ENCODE measurements at regions of chr6 and their contacts with region 1.

Region 1: GRCh38 chr6:57172136-57173055 is at the start of gene BAG2:
- DNase-seq: peak; percentile 98
- H3K4me3 ChIP-seq: peak within 1 kb of the TSS; percentile 81 to 92 (median 86)
- H3K27ac ChIP-seq: peak within 1 kb of the TSS; percentile 90 to 96 (median 96)
- H3K4me1 ChIP-seq: peaks cover 15 to 45% (median 40%) of the 10 kb centered on the region in 4 donors
- H3K27me3 ChIP-seq: no peaks in the 10 kb centered on the region
- CTCF ChIP-seq: peak; percentile 26 to 39 (median 35)
- EP300 ChIP-seq: no peak
- POLR2A ChIP-seq: peak; percentile 15
- total RNA-seq, gene BAG2: 29.0 to 42.8 (median 39.6) TPM

Region 2: DNA sequence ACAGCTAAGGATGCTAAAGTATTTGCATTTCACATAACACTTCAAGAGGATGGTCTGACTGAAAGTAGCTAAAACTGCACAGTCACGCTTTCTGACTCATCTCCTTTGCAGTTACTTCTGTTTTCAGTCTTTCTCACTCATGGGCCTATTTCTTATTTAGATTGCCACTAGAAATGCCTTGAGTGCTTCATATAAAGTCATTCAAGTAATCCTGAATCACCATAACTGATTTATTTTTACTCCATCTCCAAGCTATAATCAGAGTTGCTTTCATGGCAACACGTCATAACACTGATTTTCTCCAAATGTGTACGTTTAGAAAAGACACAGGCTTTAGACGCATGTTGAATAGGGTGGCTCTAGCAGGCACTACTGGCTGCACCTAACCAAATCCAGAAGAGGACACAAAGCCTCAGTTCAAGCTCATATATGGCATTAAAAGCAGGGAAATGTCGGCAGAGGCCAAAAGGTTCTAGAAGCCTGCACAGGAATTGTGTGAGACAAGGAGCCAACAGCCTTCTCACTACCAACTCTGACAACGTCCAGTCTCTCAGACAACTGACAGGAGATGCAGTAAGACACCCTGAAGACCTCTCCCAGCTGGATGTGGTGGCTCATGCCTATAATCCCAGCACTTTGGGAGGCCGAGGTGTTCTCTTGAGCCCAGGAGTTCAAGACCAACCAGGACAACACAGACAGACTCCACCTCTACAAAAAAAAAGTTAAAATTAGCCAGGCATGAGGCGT is 281.5 kb before region 1 on chr6:
- intact Hi-C with region 1: loop called (anchors 10 kb)
- DNase-seq: no peak
- H3K4me3 ChIP-seq: no peak overlapping the region
- H3K27ac ChIP-seq: peak overlapping the region; percentile 66 to 75 (median 70)
- H3K4me1 ChIP-seq: peaks cover 0 to 15% (median 11%) of the 10 kb centered on the region in 4 donors
- H3K27me3 ChIP-seq: no peaks in the 10 kb centered on the region
- CTCF ChIP-seq: no peak
- EP300 ChIP-seq: no peak
- POLR2A ChIP-seq: no peak

Region 3: DNA sequence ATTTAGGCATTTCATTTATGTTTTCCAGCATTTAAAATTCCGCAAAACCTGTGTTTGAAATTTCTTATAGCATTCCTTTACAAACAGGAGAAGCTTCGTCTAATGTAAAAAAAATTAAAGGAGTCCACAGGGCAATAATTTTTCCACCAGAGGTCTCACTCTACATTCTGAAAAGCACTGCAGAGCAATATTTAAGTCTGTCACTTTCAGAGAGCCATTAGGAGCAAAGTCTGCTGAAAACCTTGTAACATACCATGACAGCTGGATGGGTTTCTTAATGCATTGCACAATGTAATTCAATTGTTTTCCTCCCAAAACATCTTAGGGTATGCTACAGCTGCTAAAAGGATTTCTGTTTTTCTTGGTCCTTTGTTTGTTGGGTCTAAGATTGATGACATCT is 17.7 kb after region 1 on chr6:
- intact Hi-C with region 1: no loop called
- DNase-seq: no peak
- H3K4me3 ChIP-seq: no peak overlapping the region
- H3K27ac ChIP-seq: peak overlapping the region in 2 of 4 donors; percentile 15 to 42
- H3K4me1 ChIP-seq: peaks cover 0 to 14% (median 12%) of the 10 kb centered on the region in 4 donors
- H3K27me3 ChIP-seq: no peaks in the 10 kb centered on the region
- CTCF ChIP-seq: peak; percentile 49 to 57 (median 54)
- EP300 ChIP-seq: no peak
- POLR2A ChIP-seq: no peak

Region 4: DNA sequence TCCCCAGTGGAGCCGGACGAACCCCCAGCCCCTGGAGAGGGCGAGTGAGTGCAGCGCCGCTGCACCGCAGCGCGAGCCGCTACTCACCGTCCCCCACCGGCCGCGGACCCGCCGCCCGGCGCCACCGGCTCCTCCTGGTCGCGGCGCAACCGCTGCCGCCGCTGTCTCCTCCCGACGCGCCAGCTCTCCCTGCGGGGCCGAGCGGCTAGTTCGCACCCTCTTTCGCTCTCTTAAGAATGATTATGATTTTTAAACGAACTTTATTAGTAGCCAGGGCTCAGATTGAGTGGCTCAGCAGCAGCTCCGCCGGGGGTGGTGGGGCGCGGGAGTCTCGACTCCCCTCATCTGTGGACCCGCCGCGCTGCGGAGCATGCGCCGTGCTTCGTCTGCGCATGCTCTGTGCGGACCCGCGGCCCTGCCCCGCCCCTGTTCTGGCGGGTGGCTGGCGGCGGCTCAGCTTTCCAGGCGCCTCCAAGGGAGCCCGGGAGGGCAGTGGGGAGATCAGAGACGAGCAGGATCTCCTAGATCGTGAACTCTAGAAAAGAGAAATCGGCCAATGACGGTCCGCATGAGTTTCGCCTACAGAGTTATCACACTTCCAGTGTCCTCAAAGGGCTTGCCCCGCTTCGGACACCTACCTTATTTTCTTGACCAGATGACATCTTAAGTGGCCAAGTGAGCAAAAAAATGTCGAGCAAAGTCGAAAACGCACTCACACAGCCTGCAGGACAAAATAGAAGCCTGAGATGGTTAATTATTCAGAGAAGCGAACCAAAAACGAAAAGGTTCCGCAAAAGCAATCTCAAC is 49.7 kb after region 1 on chr6 and contains the start of gene RAB23:
- intact Hi-C with region 1: loop called (anchors 5 kb)
- DNase-seq: peak; percentile 93
- H3K4me3 ChIP-seq: peak within 1 kb of the TSS; percentile 81 to 97 (median 91)
- H3K27ac ChIP-seq: peak within 1 kb of the TSS; percentile 91 to 96 (median 94)
- H3K4me1 ChIP-seq: peaks cover 6 to 34% (median 30%) of the 10 kb centered on the region in 4 donors
- H3K27me3 ChIP-seq: no peaks in the 10 kb centered on the region
- CTCF ChIP-seq: no peak
- EP300 ChIP-seq: no peak
- POLR2A ChIP-seq: peak; percentile 88
- total RNA-seq, gene RAB23: 57.8 to 102 (median 70.3) TPM

Region 5: DNA sequence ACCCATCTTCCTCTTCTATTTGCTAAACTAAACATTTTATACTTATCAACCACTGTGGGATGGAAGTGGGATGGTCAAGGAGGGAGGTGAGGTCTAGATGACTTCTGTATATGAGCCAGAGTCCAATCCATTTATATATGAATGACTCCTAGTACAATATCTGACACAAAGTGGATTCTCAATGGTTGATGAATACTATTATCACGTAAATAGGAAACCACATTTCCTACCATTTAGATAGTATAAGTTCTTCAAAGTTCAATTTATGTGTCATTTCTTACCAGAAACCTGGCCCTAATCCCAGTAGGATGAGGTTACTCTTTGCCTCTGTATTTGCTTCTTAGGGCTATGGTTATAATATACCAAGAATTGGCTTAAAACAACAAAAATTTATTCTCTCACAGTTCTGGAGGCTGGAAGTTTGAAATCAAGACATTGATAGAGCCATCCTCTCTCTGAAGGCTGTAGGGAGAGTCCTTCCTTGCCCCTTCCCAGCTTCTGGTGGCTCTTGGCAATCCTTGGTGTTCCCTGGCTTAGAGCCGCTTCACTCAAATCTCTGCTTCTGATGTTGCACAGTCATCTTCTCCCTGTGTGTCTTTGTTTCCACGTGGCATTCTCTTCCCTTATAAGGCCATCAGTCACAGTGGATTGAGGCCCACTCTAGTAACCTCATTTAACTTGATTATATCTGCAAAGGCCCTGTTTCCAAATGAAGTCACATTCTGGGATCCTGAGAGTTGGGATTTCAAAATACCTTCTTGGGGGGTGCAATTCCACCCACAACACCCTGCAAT is 90.7 kb after region 1 on chr6:
- intact Hi-C with region 1: loop called (anchors 5 kb)
- DNase-seq: no peak
- H3K4me3 ChIP-seq: no peak overlapping the region
- H3K27ac ChIP-seq: peak overlapping the region; percentile 80 to 90 (median 82)
- H3K4me1 ChIP-seq: peaks cover 5 to 81% (median 77%) of the 10 kb centered on the region in 4 donors
- H3K27me3 ChIP-seq: no peaks in the 10 kb centered on the region
- CTCF ChIP-seq: no peak
- EP300 ChIP-seq: no peak
- POLR2A ChIP-seq: no peak

Region 6: GRCh38 chr6:57316581-57317059 is 144.2 kb after region 1 on chr6:
- intact Hi-C with region 1: loop called (anchors 5 kb)
- DNase-seq: no peak
- H3K4me3 ChIP-seq: peak overlapping the region; percentile 55 to 70 (median 62)
- H3K27ac ChIP-seq: peak overlapping the region; percentile 62 to 74 (median 69)
- H3K4me1 ChIP-seq: peaks cover 13 to 38% (median 27%) of the 10 kb centered on the region in 4 donors
- H3K27me3 ChIP-seq: no peaks in the 10 kb centered on the region
- CTCF ChIP-seq: peak; percentile 72 to 81 (median 77)
- EP300 ChIP-seq: no peak
- POLR2A ChIP-seq: no peak